Thyroid gland (tissue), 4 donors: ENCODE measurements at regions of chr18 and their contacts with region 1.

Region 1: GRCh38 chr18:63320046-63320689 is 599 bp upstream of the BCL2 start:
- DNase-seq: peak; percentile 88 to 90
- H3K4me3 ChIP-seq: peak overlapping the region in 2 of 3 donors; percentile 21 to 81
- H3K27ac ChIP-seq: peak overlapping the region in 2 of 3 donors; percentile 74 to 76
- H3K4me1 ChIP-seq: peaks cover 6 to 18% of the 10 kb centered on the region in 2 donors
- H3K27me3 ChIP-seq: no peaks in the 10 kb centered on the region
- CTCF ChIP-seq: peak in 3 of 6 experiments; percentile 7 to 33 (median 12)
- POLR2A ChIP-seq: peak in 1 of 2 donors; percentile 46

Region 2: DNA sequence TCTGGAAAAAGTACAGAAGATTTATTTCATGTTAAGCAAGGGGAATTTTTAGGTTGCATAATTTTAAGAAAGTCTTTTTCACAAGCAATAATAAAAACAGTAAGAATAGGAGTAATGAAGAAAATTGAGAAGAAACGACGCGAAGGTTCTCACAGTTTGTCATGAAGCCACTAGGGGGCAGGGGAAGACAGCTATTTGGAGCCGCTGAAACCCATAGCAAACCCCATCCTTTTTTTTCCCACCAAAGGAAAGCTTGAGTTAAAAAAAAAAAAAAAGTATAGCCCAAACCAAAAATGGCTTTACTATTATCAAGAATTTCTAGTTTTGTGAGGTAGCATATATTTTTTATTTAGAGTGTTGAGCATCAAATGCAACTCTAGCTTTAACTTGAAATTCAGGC is 303.9 kb before region 1 on chr18:
- intact Hi-C with region 1: loop called (anchors 5 kb)
- DNase-seq: peak; percentile 43 to 52
- H3K4me3 ChIP-seq: no peak overlapping the region
- H3K27ac ChIP-seq: no peak overlapping the region
- H3K4me1 ChIP-seq: no peaks in the 10 kb centered on the region
- H3K27me3 ChIP-seq: no peaks in the 10 kb centered on the region
- CTCF ChIP-seq: peak; percentile 49 to 86 (median 78)
- POLR2A ChIP-seq: no peak

Region 3: GRCh38 chr18:63131106-63131958 is 188.8 kb before region 1 on chr18:
- intact Hi-C with region 1: loop called (anchors 5 kb)
- DNase-seq: peak; percentile 56 to 58
- H3K4me3 ChIP-seq: no peak overlapping the region
- H3K27ac ChIP-seq: peak overlapping the region; percentile 19 to 70 (median 69)
- H3K4me1 ChIP-seq: peaks cover 28 to 38% of the 10 kb centered on the region in 2 donors
- H3K27me3 ChIP-seq: no peaks in the 10 kb centered on the region
- CTCF ChIP-seq: peak in 5 of 6 experiments; percentile 12 to 71 (median 55)
- POLR2A ChIP-seq: no peak

Region 4: GRCh38 chr18:63216516-63217311 is 103.5 kb before region 1 on chr18:
- intact Hi-C with region 1: no loop called
- DNase-seq: no peak
- H3K4me3 ChIP-seq: no peak overlapping the region
- H3K27ac ChIP-seq: no peak overlapping the region
- H3K4me1 ChIP-seq: peaks cover 3 to 14% of the 10 kb centered on the region in 2 donors
- H3K27me3 ChIP-seq: no peaks in the 10 kb centered on the region
- CTCF ChIP-seq: no peak
- POLR2A ChIP-seq: no peak